ENCODE measurements at regions of chr1 and their contacts with region 1.

Region 1: GRCh38 chr1:154220071-154220969 is at the start of gene UBAP2L:
- DNase-seq: peak; percentile 100
- ATAC-seq: peak; percentile 97
- total RNA-seq, gene UBAP2L: 90.2 TPM

Region 2: DNA sequence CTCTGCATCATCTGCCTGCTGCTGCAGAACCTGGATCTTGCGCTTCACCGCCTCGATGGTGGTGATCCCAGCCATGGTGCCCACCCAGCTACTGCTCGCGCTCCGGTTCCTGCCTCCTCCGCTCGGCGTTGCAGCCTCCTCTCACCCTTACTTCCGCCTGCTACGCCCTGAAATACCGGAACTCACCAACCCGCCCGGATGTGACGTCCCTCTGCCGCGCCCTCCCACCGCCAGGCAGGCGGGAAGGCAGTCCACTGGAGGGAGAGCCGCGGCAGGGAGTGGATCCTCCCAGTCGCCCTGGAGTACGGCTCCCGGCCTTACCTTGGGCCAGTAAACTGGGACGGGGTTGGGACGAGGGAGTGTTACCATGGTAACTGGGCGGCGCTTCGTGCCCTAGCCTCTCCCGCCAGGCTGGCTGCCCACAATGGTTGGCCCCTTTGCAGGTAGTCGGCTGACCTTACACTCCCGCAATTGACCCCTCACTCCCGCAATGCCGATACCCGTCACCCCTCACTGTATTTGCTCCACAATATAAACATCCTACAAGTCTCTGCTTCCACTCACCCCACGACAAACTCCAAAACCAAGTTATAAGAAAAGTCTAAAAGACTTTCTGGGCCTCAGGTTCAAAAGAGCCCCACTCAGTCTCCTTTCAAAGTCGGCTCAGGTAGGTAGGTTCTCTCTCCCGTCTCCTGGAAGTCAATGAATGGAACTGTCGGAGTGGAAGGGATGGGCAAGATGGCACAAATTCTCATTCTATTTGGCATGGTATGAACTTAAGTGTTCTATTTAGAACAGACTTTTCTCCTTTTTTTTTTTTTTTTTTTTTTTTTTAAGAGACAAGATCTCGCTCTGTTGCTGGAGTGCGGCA is 37.0 kb before region 1 on chr1:
- intact Hi-C with region 1: loop called (anchors 1 kb)
- DNase-seq: peak; percentile 98
- ATAC-seq: peak; percentile 98